AG04450 (cell line): ENCODE measurements at regions of chr1 and their contacts with region 1.

Region 1: DNA sequence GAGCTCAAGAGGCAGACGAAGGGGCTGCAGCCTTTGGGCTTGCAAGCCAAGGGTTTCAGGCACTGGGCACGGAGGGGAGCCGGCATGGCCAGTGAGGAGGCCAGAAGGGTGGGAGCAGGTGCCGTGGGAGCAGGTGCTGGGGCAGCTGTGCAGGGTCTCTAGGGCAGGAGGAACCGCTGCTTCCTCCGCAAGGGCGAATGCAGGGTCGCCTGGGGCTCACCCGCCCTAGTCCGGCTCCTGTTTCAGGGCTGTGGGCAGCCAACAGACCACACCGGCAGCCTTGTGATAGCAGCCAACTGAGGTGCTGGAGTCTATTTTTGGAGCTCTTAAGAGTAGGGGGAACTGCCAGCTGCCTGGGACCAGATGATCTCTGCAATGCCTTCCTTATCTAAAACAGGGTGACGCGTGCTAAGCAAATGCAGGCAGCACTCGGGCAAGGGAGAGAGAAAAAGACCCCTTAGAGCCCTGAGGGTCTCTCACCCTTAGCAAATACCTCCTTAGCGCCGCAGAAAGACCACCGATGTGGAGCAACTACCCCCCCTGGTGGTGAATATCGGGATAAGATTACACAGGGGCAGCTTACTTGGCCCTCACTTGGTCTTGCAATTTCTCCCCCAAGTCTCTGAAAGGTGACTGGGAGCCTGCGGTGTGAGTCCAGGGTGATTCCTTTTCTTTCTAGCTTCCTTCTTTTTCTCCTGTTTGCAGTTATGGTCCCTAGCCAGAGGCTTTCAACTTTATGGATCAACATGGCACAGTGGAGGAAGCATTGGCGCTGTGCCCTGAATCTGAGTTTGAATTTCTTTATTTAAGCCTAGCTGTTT is 20.7 kb upstream of the MAPKAPK2 start:
- DNase-seq: peak; percentile 29
- H3K4me3 ChIP-seq: peak overlapping the region; percentile 31; the same call in 1 of the 2 replicates
- H3K27ac ChIP-seq: no peak overlapping the region
- H3K27me3 ChIP-seq: peaks cover 14% of the 10 kb centered on the region
- CTCF ChIP-seq: peak; percentile 82

Region 2: GRCh38 chr1:206544562-206545257 is 119.3 kb before region 1 on chr1:
- CTCF ChIA-PET with region 1: interaction called, 16 read pairs
- POLR2A ChIA-PET with region 1: no interaction called
- DNase-seq: no peak
- H3K4me3 ChIP-seq: no peak overlapping the region
- H3K27ac ChIP-seq: no peak overlapping the region
- H3K27me3 ChIP-seq: peaks cover 13% of the 10 kb centered on the region
- CTCF ChIP-seq: peak; percentile 88

Region 3: DNA sequence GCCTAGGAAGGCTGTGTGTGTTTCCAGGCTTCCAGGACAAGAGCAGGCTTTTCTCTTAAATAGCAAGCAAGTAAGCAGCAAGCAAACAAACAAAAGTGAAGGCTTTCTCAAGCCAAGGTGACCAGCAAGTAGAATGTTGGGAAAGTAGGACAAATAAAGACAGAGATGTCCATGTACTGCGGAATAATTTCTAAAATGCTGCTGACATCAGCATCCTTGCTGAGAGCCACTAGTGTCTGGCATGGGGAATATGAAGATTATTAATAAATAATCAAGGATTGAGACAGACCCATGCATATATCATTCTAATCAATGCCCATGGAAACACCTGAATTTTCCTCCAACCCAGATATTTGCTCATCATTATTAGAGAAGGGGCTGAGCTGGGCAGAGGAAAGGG is 35.1 kb before region 1 on chr1:
- CTCF ChIA-PET with region 1: interaction called, 202 read pairs
- POLR2A ChIA-PET with region 1: no interaction called
- DNase-seq: no peak
- H3K4me3 ChIP-seq: no peak overlapping the region
- H3K27ac ChIP-seq: no peak overlapping the region
- H3K27me3 ChIP-seq: peaks cover 2% of the 10 kb centered on the region
- CTCF ChIP-seq: no peak

Region 4: DNA sequence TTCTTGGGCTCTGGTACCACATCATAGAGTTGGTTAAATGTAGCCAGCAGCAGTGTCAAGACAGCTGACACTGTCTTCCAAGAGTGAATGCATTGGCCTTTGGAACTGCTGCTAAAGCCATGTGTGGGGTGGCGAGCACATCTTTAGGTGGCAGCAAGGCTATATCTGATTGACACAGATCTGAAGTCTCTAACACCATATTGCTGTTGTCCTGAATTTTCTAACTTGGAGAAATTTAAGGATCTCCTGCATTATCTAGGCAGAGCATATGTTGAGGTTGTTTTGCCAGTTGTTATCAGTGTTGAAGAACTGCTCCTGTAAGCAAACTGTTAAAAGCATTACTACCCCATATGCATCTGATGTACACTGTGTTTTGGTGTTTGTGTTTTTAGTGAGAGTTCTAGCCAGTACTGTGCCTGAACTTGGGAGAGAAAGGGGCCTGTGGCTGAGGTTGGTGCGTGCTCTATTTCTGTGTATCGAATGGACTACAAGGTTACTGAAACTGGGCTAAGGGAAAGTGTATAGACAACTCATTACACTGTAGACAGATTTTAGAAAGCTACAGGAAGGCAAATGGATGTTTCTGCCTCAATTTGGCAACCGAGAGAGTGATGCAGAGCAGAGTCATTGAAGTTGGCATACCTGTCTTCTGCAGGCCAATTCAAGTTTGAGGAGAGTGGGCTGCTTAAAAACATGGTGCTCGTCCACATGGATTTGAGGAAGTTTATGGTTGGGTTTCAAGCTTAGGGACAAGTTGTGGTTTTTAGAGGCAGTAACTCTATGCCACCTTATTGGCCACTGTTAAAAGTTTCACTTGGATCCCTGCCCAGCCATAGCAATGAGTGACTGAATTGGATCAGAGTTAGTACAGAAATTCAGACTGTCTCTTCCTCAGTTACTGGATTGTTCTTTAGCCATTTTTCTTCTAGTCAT is 11.8 kb before region 1 on chr1:
- CTCF ChIA-PET with region 1: interaction called, 72 read pairs
- POLR2A ChIA-PET with region 1: no interaction called
- DNase-seq: no peak
- H3K4me3 ChIP-seq: no peak overlapping the region
- H3K27ac ChIP-seq: no peak overlapping the region
- H3K27me3 ChIP-seq: no peaks in the 10 kb centered on the region
- CTCF ChIP-seq: no peak

Region 5: DNA sequence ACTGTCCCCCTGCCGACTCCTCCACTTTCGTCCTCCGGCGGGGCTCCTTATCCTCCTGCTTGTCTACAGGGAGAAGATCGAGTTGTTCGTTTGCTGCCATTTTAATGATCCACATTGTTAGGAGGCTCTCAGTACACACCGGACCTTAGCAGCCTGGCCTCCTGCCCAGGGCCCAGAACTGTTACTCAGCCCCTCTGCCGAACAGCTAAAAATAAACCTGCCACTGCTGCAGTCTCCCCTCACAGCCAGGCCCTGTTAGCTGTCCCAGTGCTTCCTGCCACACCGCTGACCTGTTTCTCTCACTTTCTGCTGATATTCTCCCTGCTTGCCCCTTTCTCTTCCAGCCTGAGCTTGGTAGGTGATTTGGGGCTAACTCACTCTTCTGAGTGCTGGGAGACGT is 29.0 kb after region 1 on chr1:
- CTCF ChIA-PET with region 1: interaction called, 30 read pairs
- POLR2A ChIA-PET with region 1: no interaction called
- DNase-seq: no peak
- H3K4me3 ChIP-seq: peak overlapping the region; percentile 31
- H3K27ac ChIP-seq: peak overlapping the region; percentile 82
- H3K27me3 ChIP-seq: no peaks in the 10 kb centered on the region
- CTCF ChIP-seq: no peak

Region 6: DNA sequence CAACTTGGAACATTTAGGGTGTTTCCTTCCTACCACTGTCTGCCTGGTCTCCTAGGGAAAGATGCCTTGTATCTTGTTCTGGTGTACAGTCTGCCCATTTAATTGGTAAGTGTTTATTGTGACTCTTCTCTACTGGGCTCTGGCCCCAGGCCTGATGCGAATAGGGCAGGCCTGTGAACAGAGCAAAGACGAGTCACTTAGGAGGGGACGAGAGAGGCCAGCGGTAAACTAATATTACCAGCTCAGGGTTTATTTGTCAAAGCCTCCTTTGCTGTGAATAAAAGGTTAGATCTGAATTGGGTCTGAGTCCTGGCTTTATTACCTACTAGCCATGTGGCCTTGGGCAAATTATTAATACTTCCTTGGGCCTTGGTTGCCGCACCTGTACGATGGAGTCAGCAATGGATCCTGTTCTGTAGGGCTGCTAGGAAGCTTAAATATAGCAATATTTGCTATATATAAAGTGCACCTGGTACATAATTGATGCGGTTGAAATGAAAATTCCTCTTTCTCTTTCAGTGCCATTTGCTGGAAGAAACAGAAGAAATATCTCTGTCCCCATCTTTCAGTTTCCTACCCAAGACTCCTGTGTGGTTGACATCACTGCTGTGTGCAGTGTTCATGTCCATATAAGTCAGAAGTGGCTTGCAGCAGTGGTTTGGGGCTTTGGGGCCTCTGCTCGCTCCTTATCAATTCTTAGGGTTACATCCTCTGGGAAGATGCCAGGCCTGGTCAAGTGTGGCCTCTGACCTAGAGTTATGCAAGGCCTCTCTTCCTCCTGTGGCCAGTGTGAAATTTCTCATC is 53.0 kb after region 1 on chr1:
- CTCF ChIA-PET with region 1: interaction called, 13 read pairs
- POLR2A ChIA-PET with region 1: no interaction called
- DNase-seq: no peak
- H3K4me3 ChIP-seq: no peak overlapping the region
- H3K27ac ChIP-seq: no peak overlapping the region
- H3K27me3 ChIP-seq: no peaks in the 10 kb centered on the region
- CTCF ChIP-seq: no peak